GM10248 (cell line): ENCODE measurements at regions of chr3 and their contacts with region 1.

Region 1: DNA sequence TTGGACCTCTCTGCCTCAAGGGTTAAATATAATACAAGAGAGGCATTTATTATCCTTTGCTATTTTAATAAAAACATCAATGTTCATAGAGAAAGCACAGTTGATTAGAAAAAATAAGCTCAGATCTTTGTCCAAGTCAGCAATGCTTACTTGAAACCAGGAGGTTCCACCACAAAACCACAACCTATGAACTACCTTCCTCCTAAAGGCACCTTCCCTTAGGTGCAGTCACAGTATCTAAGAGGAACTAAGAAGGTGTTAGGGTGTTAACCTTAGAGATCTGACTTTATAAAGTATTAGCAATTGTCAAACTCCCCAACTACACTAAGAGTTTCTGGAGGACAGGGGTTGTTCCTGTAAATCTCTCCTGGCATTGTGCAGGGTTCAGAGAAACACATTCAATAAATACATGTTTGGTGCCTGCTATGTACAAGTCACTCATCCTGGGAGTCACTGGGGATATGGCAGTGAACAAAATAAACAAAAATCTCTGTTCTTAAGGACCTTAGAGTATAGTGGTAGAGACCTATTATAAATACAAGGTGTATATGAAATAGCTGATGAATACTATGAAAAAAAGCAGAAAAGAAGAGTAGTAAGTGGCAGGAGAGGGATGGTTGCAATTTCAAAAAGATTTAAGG is 208.6 kb downstream of the NFKBIZ start:
- DNase-seq: peak; percentile 67
- CTCF ChIP-seq: no peak

Region 2: GRCh38 chr3:102038477-102039142 is 19.3 kb before region 1 on chr3:
- CTCF ChIA-PET with region 1: interaction called, 13 read pairs
- POLR2A ChIA-PET with region 1: interaction called, 6 read pairs
- DNase-seq: peak; percentile 48
- CTCF ChIP-seq: no peak

Region 3: DNA sequence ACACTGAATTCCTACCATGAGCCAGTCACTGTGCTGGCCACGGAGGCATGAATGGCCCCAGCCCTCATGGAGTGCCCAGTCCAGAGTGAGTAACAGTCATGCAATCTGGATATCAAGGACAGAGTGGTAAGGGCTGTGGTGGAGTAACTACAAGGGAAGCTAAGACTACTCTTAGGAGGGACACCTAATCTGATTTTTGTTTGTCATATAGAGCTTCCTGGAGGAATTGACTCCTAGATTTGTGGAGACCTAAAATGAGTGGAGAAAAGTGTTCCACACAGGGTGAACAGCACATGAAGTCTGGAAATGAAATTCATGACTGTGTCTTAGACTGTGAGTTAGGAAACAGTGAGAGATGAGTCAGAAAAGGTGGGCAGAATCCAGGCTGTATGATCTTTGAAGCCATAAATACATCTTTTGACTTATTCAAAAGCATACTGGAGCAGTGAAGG is 11.3 kb after region 1 on chr3:
- CTCF ChIA-PET with region 1: no interaction called
- POLR2A ChIA-PET with region 1: no interaction called
- DNase-seq: no peak
- CTCF ChIP-seq: no peak

Region 4: DNA sequence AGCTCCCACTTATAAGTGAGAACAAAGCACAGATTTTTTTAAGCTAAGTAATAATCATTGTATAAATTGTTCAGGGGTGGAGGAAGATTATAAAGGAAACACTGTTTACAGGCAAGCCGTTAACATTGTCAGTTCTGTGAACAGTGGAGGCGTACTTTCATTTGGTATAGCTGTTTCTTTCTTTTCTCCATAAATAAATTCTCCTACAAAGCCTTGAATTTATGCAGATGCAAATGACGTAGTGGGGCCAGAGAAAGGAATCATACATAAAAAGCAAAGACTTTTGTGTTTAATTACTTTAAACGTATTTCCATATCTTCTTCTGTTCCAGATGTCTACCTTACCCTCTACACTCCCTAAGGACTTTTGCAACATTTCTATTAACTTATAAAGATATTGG is 1291.9 kb after region 1 on chr3:
- CTCF ChIA-PET with region 1: no interaction called
- POLR2A ChIA-PET with region 1: no interaction called
- DNase-seq: no peak
- CTCF ChIP-seq: no peak